CD8-positive, alpha-beta memory T cell (primary cell): ENCODE measurements at regions of chr2 and their contacts with region 1.

Region 1: GRCh38 chr2:85642725-85643124 is 25.3 kb downstream of the SFTPB start:
- DNase-seq: no peak
- H3K4me3 ChIP-seq: no peak overlapping the region
- H3K4me3 Mint-ChIP-seq: no peak overlapping the region
- H3K27ac ChIP-seq: no peak overlapping the region
- H3K27ac Mint-ChIP-seq: peak overlapping the region in 4 of 8 donors; percentile 15 to 89 (median 58)
- H3K4me1 ChIP-seq: no peaks in the 10 kb centered on the region
- H3K4me1 Mint-ChIP-seq: peaks cover 1 to 12% (median 10%) of the 10 kb centered on the region in 3 donors
- H3K27me3 ChIP-seq: no peaks in the 10 kb centered on the region
- H3K27me3 Mint-ChIP-seq: no peaks in the 10 kb centered on the region

Region 2: DNA sequence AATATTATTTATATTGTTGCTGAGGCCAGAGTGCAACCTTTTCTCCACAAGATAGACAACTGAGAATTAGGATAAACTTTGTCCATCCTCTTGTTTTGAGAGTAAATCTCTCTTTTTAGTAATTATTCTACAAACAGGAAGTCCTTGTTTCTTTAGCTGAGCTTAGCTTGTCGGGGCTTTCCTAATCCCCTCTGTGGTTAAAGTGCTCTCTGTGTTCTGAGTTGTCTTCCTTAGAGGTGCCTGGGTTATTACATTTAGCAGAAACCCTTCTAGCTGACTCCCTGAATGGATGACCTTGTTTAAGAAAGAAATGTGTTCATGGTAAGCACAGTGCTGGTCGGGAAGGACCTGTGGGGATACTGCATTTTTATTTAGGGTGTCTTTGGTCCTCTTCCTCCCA is 14.1 kb before region 1 on chr2:
- CTCF ChIA-PET with region 1: interaction called, 20 read pairs
- POLR2A ChIA-PET with region 1: no interaction called
- DNase-seq: no peak
- H3K4me3 ChIP-seq: no peak overlapping the region
- H3K4me3 Mint-ChIP-seq: peak overlapping the region in 1 of 7 donors; percentile 56
- H3K27ac ChIP-seq: no peak overlapping the region
- H3K27ac Mint-ChIP-seq: peak overlapping the region in 5 of 8 donors; percentile 23 to 51 (median 40)
- H3K4me1 ChIP-seq: no peaks in the 10 kb centered on the region
- H3K4me1 Mint-ChIP-seq: peaks cover 6 to 25% (median 20%) of the 10 kb centered on the region in 3 donors
- H3K27me3 ChIP-seq: no peaks in the 10 kb centered on the region
- H3K27me3 Mint-ChIP-seq: peaks cover 0 to 1% of the 10 kb centered on the region in 2 donors